ENCODE measurements at regions of chr9 and their contacts with region 1.

Region 1: DNA sequence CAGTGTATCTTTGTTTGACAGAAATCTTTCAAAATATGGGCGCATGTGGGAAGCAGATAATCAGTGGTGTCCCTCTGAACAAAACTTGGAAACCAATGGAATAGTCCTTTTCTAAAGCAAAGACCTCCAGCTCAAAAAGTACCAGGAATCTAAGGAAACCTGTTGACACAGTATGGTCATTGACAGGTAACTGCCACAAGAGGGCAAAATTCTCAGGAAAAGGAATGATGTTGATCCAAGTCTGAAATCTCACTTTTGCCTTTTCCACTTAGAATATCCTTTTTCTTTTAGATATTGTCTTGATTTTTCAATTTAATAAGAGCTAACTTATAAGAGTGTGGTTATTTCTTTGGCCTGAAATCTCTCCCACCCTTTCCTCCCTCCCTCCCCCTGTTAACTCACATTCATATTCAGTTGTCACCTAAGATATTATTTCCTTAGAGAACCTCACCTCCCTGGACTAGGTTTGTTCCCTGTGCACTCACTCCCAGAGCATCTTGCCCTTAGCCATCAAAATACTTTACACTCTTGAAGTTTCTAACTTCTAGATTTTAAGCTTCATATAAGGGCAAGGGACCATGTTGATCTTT is 59.0 kb upstream of the BARX1 start:
- DNase-seq: no peak
- H3K4me3 ChIP-seq: no peak overlapping the region
- H3K27ac ChIP-seq: no peak overlapping the region
- H3K4me1 ChIP-seq: no peaks in the 10 kb centered on the region
- H3K27me3 ChIP-seq: no peaks in the 10 kb centered on the region
- CTCF ChIP-seq: peak in 2 of 3 experiments; percentile 61 to 75; a peak in 2 of 4 replicates
- EP300 ChIP-seq: no peak
- POLR2A ChIP-seq: no peak
- RAD21 ChIP-seq: peak; percentile 57 to 65

Region 2: DNA sequence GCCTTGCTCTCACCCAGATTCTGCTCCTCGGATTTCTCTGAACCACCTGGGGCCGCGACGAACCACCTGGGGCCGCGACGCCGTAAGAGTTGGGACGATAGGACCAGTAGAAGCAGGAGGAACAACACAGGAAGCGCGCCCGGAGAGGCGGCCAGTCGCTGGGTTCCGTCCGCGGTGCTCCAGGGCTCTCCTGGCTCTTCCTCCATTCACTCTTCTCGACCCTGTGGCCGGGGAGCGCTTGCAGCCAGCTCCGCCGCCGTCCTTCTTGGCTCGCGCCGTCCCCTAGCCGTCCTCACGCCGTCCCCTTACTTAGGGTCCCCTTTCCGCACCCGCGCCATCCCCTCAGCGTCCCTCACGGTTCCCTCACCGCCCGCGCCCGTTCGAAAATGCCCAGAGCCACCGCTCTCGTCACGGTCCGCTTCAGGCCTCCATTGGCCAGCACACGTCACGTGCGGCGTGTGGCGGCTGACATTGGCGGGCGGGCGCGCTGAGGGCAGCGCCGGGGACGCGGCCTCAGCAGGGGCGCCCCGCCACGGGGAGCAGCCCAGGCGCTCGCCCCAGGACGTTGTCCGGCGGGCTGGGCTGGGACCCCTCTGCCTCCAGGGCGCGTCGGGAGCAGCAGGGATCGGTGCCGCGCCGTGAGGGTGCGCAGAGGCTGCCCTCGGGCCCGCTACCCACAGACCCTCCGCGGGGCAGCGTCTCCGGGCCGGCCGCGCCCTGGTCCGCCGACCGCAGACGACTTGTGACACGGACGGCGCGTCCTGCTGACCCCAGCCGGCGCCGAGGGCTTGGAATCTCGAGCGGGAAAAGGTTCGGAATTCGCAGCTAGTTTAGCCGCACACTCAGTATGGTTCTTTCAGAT is 16.4 kb after region 1 on chr9:
- CTCF ChIA-PET with region 1: interaction called, 10 read pairs
- POLR2A ChIA-PET with region 1: no interaction called
- DNase-seq: peak; percentile 43 to 89
- H3K4me3 ChIP-seq: peak overlapping the region; percentile 54 to 80 (median 76)
- H3K27ac ChIP-seq: peak overlapping the region; percentile 50; the same call in 1 of the 2 replicates
- H3K4me1 ChIP-seq: no peaks in the 10 kb centered on the region
- H3K27me3 ChIP-seq: peaks cover 0 to 7% (median 1%) of the 10 kb centered on the region in 4 experiments; a peak in 4 of 7 replicates
- CTCF ChIP-seq: no peak
- EP300 ChIP-seq: no peak; a peak in 1 of 3 replicates
- POLR2A ChIP-seq: peak; percentile 82 to 87
- RAD21 ChIP-seq: no peak

Region 3: GRCh38 chr9:94065535-94065961 is 51.4 kb after region 1 on chr9:
- CTCF ChIA-PET with region 1: interaction called, 13 read pairs
- POLR2A ChIA-PET with region 1: no interaction called
- DNase-seq: peak; percentile 60 to 82
- H3K4me3 ChIP-seq: no peak overlapping the region
- H3K27ac ChIP-seq: no peak overlapping the region
- H3K4me1 ChIP-seq: peaks cover 0 to 2% (median 0%) of the 10 kb centered on the region in 4 experiments; a peak in 2 of 7 replicates
- H3K27me3 ChIP-seq: no peaks in the 10 kb centered on the region
- CTCF ChIP-seq: peak in 2 of 3 experiments; percentile 73 to 87; a peak in 3 of 4 replicates
- EP300 ChIP-seq: no peak
- POLR2A ChIP-seq: no peak
- RAD21 ChIP-seq: peak; percentile 82 to 87

Region 4: GRCh38 chr9:94157050-94157764 is 143.0 kb after region 1 on chr9:
- CTCF ChIA-PET with region 1: interaction called, 25 read pairs
- POLR2A ChIA-PET with region 1: no interaction called
- DNase-seq: no peak
- H3K4me3 ChIP-seq: no peak overlapping the region
- H3K27ac ChIP-seq: no peak overlapping the region
- H3K4me1 ChIP-seq: no peaks in the 10 kb centered on the region
- H3K27me3 ChIP-seq: no peaks in the 10 kb centered on the region; a peak in 1 of 7 replicates
- CTCF ChIP-seq: no peak
- EP300 ChIP-seq: no peak
- POLR2A ChIP-seq: no peak
- RAD21 ChIP-seq: no peak

Region 5: GRCh38 chr9:94197607-94198006 is 183.4 kb after region 1 on chr9:
- CTCF ChIA-PET with region 1: interaction called, 13 read pairs
- POLR2A ChIA-PET with region 1: no interaction called
- DNase-seq: no peak
- H3K4me3 ChIP-seq: no peak overlapping the region
- H3K27ac ChIP-seq: no peak overlapping the region
- H3K4me1 ChIP-seq: no peaks in the 10 kb centered on the region
- H3K27me3 ChIP-seq: no peaks in the 10 kb centered on the region
- CTCF ChIP-seq: peak in 2 of 3 experiments; percentile 9 to 15; a peak in 2 of 4 replicates
- EP300 ChIP-seq: no peak
- POLR2A ChIP-seq: no peak
- RAD21 ChIP-seq: peak in 1 of 2 experiments; percentile 18; a peak in 1 of 4 replicates

Region 6: GRCh38 chr9:94232429-94232828 is 218.3 kb after region 1 on chr9:
- CTCF ChIA-PET with region 1: interaction called, 11 read pairs
- POLR2A ChIA-PET with region 1: no interaction called
- DNase-seq: no peak
- H3K4me3 ChIP-seq: no peak overlapping the region
- H3K27ac ChIP-seq: no peak overlapping the region
- H3K4me1 ChIP-seq: no peaks in the 10 kb centered on the region
- H3K27me3 ChIP-seq: no peaks in the 10 kb centered on the region
- CTCF ChIP-seq: no peak
- EP300 ChIP-seq: no peak
- POLR2A ChIP-seq: no peak
- RAD21 ChIP-seq: no peak